Activated CD4-positive, alpha-beta T cell treated with anti-CD3 and anti-CD28 coated beads for 36 hours (primary cell): ENCODE measurements at regions of chr13 and their contacts with region 1.

Region 1: GRCh38 chr13:26186118-26186870 is 35.8 kb downstream of the RNF6 start:
- DNase-seq: peak; percentile 95
- ATAC-seq: peak; percentile 83
- H3K4me3 Mint-ChIP-seq: peak overlapping the region; percentile 82
- H3K27ac Mint-ChIP-seq: peak overlapping the region; percentile 96
- H3K4me1 Mint-ChIP-seq: peaks cover 29% of the 10 kb centered on the region
- H3K27me3 Mint-ChIP-seq: no peaks in the 10 kb centered on the region

Region 2: DNA sequence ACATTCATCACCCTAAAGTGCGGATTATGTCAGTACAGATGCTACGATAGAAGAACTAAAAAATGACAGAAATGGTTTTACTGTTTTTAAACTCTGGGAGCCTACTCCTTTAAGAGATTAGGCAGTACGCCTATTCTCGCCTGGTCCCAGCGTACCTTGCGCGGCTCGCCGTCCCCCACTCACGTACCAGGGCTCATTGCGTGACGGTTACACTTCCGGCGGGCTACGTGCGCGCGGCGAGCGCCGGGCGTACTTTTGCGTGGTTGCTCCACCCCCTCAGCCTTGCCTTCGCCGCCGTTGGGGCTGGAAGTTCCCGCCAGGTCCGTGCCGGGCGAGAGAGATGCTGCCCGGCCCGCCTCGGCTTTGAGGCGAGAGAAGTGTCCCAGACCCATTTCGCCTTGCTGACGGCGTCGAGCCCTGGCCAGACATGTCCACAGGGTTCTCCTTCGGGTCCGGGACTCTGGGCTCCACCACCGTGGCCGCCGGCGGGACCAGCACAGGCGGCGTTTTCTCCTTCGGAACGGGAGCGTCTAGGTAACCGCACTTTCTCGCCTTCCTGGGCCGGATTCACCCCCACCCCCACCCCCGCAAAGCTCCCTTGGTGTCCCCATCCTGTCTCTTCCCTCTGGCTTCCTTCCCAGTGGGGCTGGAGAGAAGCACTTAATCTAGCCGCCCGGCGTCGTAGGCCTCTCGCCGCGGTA is 884.8 kb before region 1 on chr13 and contains the start of gene NUP58:
- CTCF ChIA-PET with region 1: no interaction called
- POLR2A ChIA-PET with region 1: no interaction called
- intact Hi-C with region 1: loop called in 1 of 2 experiments (anchors 1 kb)
- DNase-seq: peak; percentile 97
- ATAC-seq: peak; percentile 98
- H3K4me3 Mint-ChIP-seq: peak within 1 kb of the TSS; percentile 94
- H3K27ac Mint-ChIP-seq: peak within 1 kb of the TSS; percentile 95
- H3K4me1 Mint-ChIP-seq: peaks cover 30% of the 10 kb centered on the region
- H3K27me3 Mint-ChIP-seq: peaks cover 4% of the 10 kb centered on the region
- total RNA-seq, gene NUP58: 134 to 137 TPM

Region 3: DNA sequence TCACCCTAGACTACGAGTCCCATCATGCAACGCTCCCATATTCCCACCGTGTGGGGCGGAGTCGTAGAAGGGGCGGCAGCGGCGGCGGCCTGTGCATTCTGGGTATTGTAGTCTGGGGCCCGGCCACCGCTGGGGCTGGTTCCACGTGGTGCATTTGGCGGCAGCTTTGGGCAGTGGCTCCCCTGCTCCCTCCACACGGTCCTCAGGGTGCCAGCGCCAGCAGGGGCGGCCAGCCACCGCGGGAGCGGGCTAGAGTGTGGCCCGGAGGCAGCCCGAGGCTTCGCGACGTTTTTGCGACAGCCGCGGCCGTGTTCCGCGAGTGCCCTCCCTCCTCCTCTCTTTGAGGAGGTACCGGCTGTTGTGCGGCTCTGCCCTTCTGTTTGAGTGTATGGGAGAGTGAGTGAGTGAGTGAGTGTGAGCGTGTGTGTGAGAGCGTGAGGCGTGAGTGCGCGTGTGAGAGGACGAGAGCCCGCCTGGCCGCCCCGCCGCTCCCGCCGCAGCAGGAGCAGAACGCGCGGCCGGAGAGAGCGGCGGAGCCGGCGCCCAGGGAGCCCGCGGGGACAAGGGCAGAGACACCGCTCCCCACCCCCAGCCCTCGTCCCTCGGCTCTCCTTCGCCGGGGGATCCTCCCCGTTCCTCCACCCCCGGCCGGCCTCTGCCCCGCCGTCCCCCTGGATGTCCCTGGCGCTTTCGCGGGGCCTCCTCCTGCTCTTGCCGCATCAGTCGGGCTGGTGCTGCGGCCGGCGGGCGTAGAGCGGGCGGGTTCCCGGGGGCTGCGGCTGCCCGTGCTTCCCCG is 67.7 kb after region 1 on chr13 and contains the start of gene CDK8:
- CTCF ChIA-PET with region 1: interaction called, 4 read pairs
- POLR2A ChIA-PET with region 1: no interaction called
- intact Hi-C with region 1: loop called (anchors 1 kb)
- DNase-seq: peak; percentile 93
- ATAC-seq: peak; percentile 93
- H3K4me3 Mint-ChIP-seq: peak within 1 kb of the TSS; percentile 82
- H3K27ac Mint-ChIP-seq: peak within 1 kb of the TSS; percentile 84
- H3K4me1 Mint-ChIP-seq: peaks cover 38% of the 10 kb centered on the region
- H3K27me3 Mint-ChIP-seq: no peaks in the 10 kb centered on the region
- total RNA-seq, gene CDK8: 17.4 to 24.3 TPM

Region 4: DNA sequence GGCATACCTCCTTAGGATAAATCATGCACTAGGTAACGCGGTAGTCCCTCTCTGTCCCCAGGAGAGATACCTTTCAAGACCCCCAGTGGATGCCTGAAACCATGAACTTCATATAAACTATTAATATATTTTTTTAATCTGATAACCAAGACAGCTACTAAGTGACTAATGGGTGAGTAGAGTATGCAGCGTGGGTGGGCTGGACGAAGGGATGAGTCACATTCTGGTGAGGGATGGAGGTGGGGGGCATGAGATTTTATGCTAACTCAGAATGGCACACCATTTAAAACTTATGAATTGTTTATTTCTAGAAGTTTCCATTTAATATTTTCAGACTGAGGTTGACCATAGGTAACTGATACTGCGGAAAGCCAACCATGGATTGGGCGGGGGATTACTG is 113.8 kb after region 1 on chr13:
- CTCF ChIA-PET with region 1: no interaction called
- POLR2A ChIA-PET with region 1: no interaction called
- intact Hi-C with region 1: no loop called
- DNase-seq: no peak
- ATAC-seq: no peak
- H3K4me3 Mint-ChIP-seq: no peak overlapping the region
- H3K27ac Mint-ChIP-seq: no peak overlapping the region
- H3K4me1 Mint-ChIP-seq: peaks cover 35% of the 10 kb centered on the region
- H3K27me3 Mint-ChIP-seq: no peaks in the 10 kb centered on the region

Region 5: GRCh38 chr13:26482451-26483197 is 296.3 kb after region 1 on chr13:
- CTCF ChIA-PET with region 1: interaction called, 23 read pairs
- POLR2A ChIA-PET with region 1: no interaction called
- intact Hi-C with region 1: loop called (anchors 1 kb)
- DNase-seq: peak; percentile 78
- ATAC-seq: peak; percentile 83
- H3K4me3 Mint-ChIP-seq: no peak overlapping the region
- H3K27ac Mint-ChIP-seq: no peak overlapping the region
- H3K4me1 Mint-ChIP-seq: peaks cover 14% of the 10 kb centered on the region
- H3K27me3 Mint-ChIP-seq: no peaks in the 10 kb centered on the region

Region 6: DNA sequence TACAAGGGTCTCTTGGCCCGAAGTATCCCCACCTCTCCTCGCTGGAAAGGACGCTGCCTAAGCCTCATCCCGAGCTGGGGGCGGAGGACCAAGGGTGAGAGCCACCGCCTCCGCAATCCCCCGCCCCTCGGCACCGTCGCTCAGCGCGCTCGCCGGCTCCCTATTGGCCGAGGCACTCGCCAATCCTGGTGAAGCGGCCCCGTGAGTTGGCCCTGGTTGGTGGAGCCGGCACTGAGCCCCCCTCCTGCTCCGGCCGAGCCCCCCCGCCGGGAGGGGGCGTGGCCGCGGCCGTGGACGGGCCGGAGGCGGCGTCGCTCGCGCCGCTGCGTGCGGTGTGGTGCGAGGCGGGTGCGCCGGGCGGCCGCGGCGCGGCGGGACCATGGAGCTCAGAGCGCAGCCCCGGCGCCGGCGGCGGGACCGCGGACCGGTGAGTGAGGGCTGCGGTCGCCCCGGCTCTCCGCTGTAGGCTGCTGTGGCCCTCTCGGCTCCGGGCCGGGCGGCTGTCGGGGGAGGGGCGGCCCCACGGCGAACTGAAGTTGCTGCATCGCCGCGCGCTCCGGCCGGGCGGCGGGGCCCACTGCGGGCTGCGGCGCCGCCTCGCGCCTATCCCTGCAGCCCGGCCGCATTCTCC is 371.2 kb after region 1 on chr13 and contains the start of gene WASF3:
- CTCF ChIA-PET with region 1: no interaction called
- POLR2A ChIA-PET with region 1: no interaction called
- intact Hi-C with region 1: loop called in 1 of 2 experiments (anchors 1 kb)
- DNase-seq: peak; percentile 78
- ATAC-seq: peak; percentile 98
- H3K4me3 Mint-ChIP-seq: peak within 1 kb of the TSS; percentile 50
- H3K27ac Mint-ChIP-seq: no peak within 1 kb of the TSS
- H3K4me1 Mint-ChIP-seq: peaks cover 10% of the 10 kb centered on the region
- H3K27me3 Mint-ChIP-seq: peaks cover 34% of the 10 kb centered on the region
- total RNA-seq, gene WASF3: 0.37 to 0.44 TPM

Region 7: GRCh38 chr13:27171827-27172494 is 985.7 kb after region 1 on chr13:
- CTCF ChIA-PET with region 1: no interaction called
- POLR2A ChIA-PET with region 1: no interaction called
- intact Hi-C with region 1: loop called in 1 of 2 experiments (anchors 10 kb)
- DNase-seq: peak; percentile 93
- ATAC-seq: peak; percentile 84
- H3K4me3 Mint-ChIP-seq: peak overlapping the region; percentile 70
- H3K27ac Mint-ChIP-seq: peak overlapping the region; percentile 88
- H3K4me1 Mint-ChIP-seq: peaks cover 60% of the 10 kb centered on the region
- H3K27me3 Mint-ChIP-seq: no peaks in the 10 kb centered on the region